Left lung (tissue), 14 donors: ENCODE measurements at regions of chr12 and their contacts with region 1.

Region 1: GRCh38 chr12:49358483-49359141 is 8.7 kb upstream of the SPATS2 start:
- DNase-seq: peak in 1 of 4 donors; percentile 76
- ATAC-seq: peak; percentile 96
- H3K4me3 ChIP-seq: no peak overlapping the region
- H3K27ac ChIP-seq: no peak overlapping the region
- H3K4me1 ChIP-seq: no peaks in the 10 kb centered on the region
- H3K27me3 ChIP-seq: peaks cover 0 to 27% of the 10 kb centered on the region in 2 donors
- CTCF ChIP-seq: peak; percentile 57 to 75

Region 2: DNA sequence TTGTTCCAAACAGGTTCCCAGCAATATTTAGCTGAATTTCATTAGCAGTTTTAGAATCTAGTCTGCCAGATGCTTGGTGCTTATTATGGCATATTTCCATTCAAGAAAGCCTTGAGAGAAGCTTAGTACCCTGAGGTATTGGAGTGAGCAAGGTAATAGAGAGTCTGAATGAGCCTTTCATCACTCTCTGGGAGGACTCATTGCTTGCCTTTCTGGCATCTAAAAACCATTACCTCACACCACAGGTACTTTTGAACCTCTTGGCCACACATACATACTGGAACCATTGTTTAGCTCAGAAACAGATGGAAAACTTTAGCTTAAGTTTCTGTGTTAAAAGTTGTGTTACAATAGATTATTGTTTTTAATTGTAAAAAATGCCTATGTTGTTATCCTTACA is 152.8 kb after region 1 on chr12:
- intact Hi-C with region 1: loop called in 1 of 2 experiments (anchors 5 kb)
- DNase-seq: no peak
- ATAC-seq: no peak
- H3K4me3 ChIP-seq: no peak overlapping the region
- H3K27ac ChIP-seq: no peak overlapping the region
- H3K4me1 ChIP-seq: no peaks in the 10 kb centered on the region
- H3K27me3 ChIP-seq: no peaks in the 10 kb centered on the region
- CTCF ChIP-seq: no peak